ENCODE measurements at regions of chr6 and their contacts with region 1.

Region 1: GRCh38 chr6:55069132-55069781 is 105.1 kb upstream of the HCRTR2 start:
- DNase-seq: no peak

Region 2: DNA sequence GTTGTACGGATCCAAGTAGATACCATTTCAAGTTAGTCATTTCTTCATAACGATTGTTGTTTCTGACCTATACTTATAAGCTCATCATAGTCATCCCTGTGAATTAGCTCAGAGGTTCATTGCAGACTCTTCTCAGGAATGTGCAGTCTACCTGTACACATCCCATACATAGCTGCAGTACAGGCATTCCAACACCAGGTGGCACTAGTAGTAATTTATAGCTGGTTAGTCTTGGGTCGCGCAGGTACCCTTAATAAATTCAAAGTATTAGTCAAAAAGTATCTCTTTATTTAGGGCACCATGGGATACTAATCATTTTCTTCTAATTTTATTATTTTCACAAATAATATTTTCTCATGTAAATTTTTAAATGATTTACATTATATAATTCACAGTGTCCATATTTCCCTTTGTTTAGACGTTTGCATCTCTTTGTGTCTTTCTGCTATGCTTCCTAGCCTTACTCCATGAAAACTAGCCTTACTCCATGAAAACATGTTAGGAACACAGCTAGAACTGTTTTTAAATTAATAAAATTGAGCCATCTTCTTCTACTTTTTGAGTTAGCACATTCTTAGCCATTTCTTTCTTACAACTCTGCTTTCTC is 351.3 kb before region 1 on chr6:
- intact Hi-C with region 1: loop called (anchors 10 kb)
- DNase-seq: no peak

Measured in cardiac septum (tissue), 1 donor.